Activated CD4-positive, alpha-beta T cell treated with anti-CD3 and anti-CD28 coated beads for 36 hours (primary cell): ENCODE measurements at regions of chr10 and their contacts with region 1.

Region 1: DNA sequence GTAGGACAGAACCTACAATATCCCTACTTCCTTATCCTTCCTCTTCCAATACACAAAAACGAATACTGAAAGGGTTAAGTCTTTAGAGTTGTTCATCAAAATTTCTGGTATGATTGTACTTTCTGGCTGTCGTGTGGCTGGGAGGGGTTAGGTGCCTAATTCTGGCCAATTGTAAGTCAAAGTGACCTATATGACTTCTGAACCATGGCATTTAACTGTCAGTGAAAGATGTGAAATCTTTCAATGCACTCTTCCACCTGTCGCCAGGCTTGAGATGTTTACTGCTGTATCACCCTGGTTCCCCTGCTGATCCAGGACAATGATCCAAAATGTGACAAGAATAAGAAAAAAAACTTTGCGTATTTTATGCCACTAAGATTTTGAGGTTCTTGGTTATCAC is 20.8 kb downstream of the EPC1 start:
- DNase-seq: peak; percentile 30
- ATAC-seq: peak; percentile 50
- H3K4me3 Mint-ChIP-seq: no peak overlapping the region
- H3K27ac Mint-ChIP-seq: peak overlapping the region; percentile 40
- H3K4me1 Mint-ChIP-seq: peaks cover 85% of the 10 kb centered on the region
- H3K27me3 Mint-ChIP-seq: no peaks in the 10 kb centered on the region

Region 2: DNA sequence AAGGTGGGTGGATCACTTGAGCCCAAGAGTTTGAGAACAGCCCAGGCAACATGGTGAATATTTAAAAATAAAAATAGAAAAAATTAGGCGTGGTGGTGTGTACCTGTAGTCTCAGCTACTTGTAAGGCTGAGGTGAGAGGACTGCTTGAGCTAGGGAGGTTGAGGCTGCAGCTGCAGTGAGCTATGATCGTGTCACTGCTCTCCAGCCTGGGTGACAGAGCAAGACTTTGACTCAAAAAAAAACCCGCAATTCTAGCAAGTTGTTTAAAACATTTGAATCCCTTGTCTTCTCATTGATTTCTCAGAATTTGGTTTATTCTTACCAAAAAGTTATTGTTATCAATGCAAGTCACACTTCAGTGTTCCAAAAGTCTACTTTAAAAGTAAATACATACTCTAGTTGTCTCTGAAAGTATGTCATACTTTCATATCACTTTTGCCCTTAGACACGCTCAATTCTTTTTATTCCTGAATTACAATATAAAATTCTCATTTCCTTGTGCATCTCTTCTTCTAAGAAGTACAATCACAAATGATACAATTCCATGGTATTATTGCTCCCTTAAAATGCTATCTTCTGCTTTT is 14.6 kb after region 1 on chr10:
- CTCF ChIA-PET with region 1: interaction called, 4 read pairs
- POLR2A ChIA-PET with region 1: no interaction called
- intact Hi-C with region 1: loop called in 1 of 2 experiments (anchors 2 kb)
- DNase-seq: peak; percentile 60
- ATAC-seq: peak; percentile 82
- H3K4me3 Mint-ChIP-seq: peak overlapping the region; percentile 14
- H3K27ac Mint-ChIP-seq: peak overlapping the region; percentile 69
- H3K4me1 Mint-ChIP-seq: peaks cover 89% of the 10 kb centered on the region
- H3K27me3 Mint-ChIP-seq: no peaks in the 10 kb centered on the region